ENCODE measurements at regions of chr3 and their contacts with region 1.

Region 1: GRCh38 chr3:128426128-128426921 is 40.4 kb downstream of the DNAJB8 start:
- H3K4me3 Mint-ChIP-seq: peak overlapping the region; percentile 43
- H3K27ac Mint-ChIP-seq: no peak overlapping the region
- H3K4me1 Mint-ChIP-seq: no peaks in the 10 kb centered on the region
- H3K27me3 Mint-ChIP-seq: peaks cover 32% of the 10 kb centered on the region

Region 2: GRCh38 chr3:128456776-128457715 is 30.7 kb after region 1 on chr3:
- intact Hi-C with region 1: no loop called
- H3K4me3 Mint-ChIP-seq: no peak overlapping the region
- H3K27ac Mint-ChIP-seq: no peak overlapping the region
- H3K4me1 Mint-ChIP-seq: no peaks in the 10 kb centered on the region
- H3K27me3 Mint-ChIP-seq: peaks cover 50% of the 10 kb centered on the region

Region 3: DNA sequence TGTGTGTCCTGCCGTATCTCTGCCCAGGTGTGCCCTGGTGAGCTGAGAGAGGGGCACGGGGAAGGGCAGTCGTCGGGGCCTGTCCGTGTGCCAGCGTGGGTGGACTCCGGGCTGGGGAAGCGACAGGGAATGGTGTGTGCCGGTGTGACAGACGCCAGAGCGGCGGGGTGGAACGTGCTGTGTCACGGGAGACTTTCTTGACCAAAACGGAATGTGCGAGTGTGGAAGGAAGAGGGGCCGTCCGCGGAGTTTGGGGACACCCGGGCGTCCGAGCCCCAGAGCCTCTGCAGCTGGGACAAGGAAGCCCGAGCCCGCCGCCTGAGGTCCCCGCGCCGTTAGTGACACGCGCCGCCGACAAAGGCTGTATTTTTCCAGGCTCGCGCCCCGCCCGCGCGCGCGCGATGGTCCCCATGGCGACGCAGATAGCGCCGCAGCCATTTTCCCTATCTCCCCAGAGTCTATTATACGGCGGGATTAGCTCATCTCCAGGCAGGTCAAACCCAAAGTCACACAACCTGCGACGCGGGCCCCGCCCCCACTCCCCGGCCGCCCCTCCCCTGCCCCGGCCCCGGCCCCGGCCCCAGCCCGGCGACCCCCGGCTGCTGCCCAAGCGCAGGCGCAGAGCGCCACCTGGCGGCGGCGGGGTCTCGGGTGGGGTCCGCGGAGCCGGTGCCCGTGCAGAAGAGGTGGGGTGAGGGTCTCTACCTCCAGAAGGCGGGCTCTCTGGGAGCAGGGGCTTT is 71.2 kb after region 1 on chr3:
- intact Hi-C with region 1: loop called (anchors 2 kb)
- H3K4me3 Mint-ChIP-seq: peak overlapping the region; percentile 67
- H3K27ac Mint-ChIP-seq: no peak overlapping the region
- H3K4me1 Mint-ChIP-seq: peaks cover 20% of the 10 kb centered on the region
- H3K27me3 Mint-ChIP-seq: peaks cover 64% of the 10 kb centered on the region

Region 4: GRCh38 chr3:128523591-128523990 is 97.3 kb after region 1 on chr3:
- intact Hi-C with region 1: no loop called
- H3K4me3 Mint-ChIP-seq: no peak overlapping the region
- H3K27ac Mint-ChIP-seq: no peak overlapping the region
- H3K4me1 Mint-ChIP-seq: peaks cover 19% of the 10 kb centered on the region
- H3K27me3 Mint-ChIP-seq: peaks cover 1% of the 10 kb centered on the region

Region 5: DNA sequence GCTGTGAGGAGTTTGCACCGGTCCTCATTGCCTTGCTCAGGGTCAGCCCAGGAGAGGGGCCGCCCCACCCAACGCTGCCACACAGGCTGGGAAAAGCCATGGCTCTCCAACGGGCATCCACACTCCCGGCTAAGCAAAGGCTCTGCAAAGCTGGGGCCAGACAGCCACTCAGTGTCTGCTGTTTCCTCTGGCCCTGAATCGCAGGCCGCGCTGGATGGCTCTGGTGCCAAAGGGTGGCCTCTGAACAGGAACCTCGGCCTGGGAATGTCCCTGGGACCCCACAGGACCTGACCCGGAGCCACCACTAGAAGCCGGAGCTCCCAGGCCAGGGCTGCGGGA is 181.4 kb after region 1 on chr3:
- intact Hi-C with region 1: loop called (anchors 2 kb)
- H3K4me3 Mint-ChIP-seq: peak overlapping the region; percentile 75
- H3K27ac Mint-ChIP-seq: no peak overlapping the region
- H3K4me1 Mint-ChIP-seq: peaks cover 23% of the 10 kb centered on the region
- H3K27me3 Mint-ChIP-seq: peaks cover 7% of the 10 kb centered on the region